ENCODE measurements at regions of chr5 and their contacts with region 1.

Region 1: GRCh38 chr5:170267431-170268152 is 30.0 kb downstream of the LCP2 start:
- DNase-seq: peak; percentile 71 to 93 (median 78)
- ATAC-seq: peak; percentile 75
- H3K4me3 ChIP-seq: peak overlapping the region; percentile 8
- H3K4me3 Mint-ChIP-seq: peak overlapping the region; percentile 70
- H3K27ac ChIP-seq: peak overlapping the region; percentile 77 to 82
- H3K27ac Mint-ChIP-seq: peak overlapping the region; percentile 96
- H3K4me1 ChIP-seq: peaks cover 84% of the 10 kb centered on the region
- H3K4me1 Mint-ChIP-seq: peaks cover 93% of the 10 kb centered on the region
- H3K27me3 ChIP-seq: no peaks in the 10 kb centered on the region
- H3K27me3 Mint-ChIP-seq: no peaks in the 10 kb centered on the region
- CTCF ChIP-seq: peak; percentile 91

Region 2: DNA sequence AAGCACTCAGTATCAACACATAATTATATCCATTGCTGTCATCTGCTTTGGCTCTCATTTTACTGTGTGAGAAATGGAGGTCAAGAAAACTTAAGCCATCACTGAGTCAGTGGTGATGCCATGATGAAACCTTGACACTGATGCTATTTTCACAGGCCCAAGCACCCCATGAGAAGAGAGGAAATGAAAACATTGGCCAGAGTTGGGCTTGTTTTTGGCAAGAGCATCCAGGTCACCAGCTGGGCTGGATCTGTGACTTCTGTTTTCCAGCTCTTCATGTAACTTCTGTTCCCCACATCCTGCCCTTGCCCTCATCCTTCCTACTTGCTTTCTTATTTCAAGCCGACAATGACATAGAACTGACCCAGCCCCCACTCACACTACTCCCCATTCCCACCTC is 19.9 kb after region 1 on chr5:
- CTCF ChIA-PET with region 1: interaction called, 22 read pairs
- POLR2A ChIA-PET with region 1: interaction called, 426 read pairs
- intact Hi-C with region 1: no loop called
- DNase-seq: peak in 3 of 14 experiments; percentile 50 to 55 (median 51)
- ATAC-seq: no peak
- H3K4me3 ChIP-seq: no peak overlapping the region
- H3K4me3 Mint-ChIP-seq: peak overlapping the region; percentile 47
- H3K27ac ChIP-seq: peak overlapping the region; percentile 62 to 63
- H3K27ac Mint-ChIP-seq: peak overlapping the region; percentile 96
- H3K4me1 ChIP-seq: peaks cover 94% of the 10 kb centered on the region
- H3K4me1 Mint-ChIP-seq: peaks cover 100% of the 10 kb centered on the region
- H3K27me3 ChIP-seq: no peaks in the 10 kb centered on the region
- H3K27me3 Mint-ChIP-seq: no peaks in the 10 kb centered on the region
- CTCF ChIP-seq: no peak

Region 3: GRCh38 chr5:170293273-170293672 is 25.7 kb after region 1 on chr5:
- CTCF ChIA-PET with region 1: interaction called, 22 read pairs
- POLR2A ChIA-PET with region 1: interaction called, 426 read pairs
- intact Hi-C with region 1: no loop called
- DNase-seq: peak in 5 of 14 experiments; percentile 39 to 83 (median 74)
- ATAC-seq: peak; percentile 10
- H3K4me3 ChIP-seq: peak overlapping the region; percentile 66
- H3K4me3 Mint-ChIP-seq: peak overlapping the region; percentile 98
- H3K27ac ChIP-seq: peak overlapping the region; percentile 49 to 98
- H3K27ac Mint-ChIP-seq: peak overlapping the region; percentile 96
- H3K4me1 ChIP-seq: peaks cover 66% of the 10 kb centered on the region
- H3K4me1 Mint-ChIP-seq: peaks cover 82% of the 10 kb centered on the region
- H3K27me3 ChIP-seq: no peaks in the 10 kb centered on the region
- H3K27me3 Mint-ChIP-seq: no peaks in the 10 kb centered on the region
- CTCF ChIP-seq: no peak

Region 4: DNA sequence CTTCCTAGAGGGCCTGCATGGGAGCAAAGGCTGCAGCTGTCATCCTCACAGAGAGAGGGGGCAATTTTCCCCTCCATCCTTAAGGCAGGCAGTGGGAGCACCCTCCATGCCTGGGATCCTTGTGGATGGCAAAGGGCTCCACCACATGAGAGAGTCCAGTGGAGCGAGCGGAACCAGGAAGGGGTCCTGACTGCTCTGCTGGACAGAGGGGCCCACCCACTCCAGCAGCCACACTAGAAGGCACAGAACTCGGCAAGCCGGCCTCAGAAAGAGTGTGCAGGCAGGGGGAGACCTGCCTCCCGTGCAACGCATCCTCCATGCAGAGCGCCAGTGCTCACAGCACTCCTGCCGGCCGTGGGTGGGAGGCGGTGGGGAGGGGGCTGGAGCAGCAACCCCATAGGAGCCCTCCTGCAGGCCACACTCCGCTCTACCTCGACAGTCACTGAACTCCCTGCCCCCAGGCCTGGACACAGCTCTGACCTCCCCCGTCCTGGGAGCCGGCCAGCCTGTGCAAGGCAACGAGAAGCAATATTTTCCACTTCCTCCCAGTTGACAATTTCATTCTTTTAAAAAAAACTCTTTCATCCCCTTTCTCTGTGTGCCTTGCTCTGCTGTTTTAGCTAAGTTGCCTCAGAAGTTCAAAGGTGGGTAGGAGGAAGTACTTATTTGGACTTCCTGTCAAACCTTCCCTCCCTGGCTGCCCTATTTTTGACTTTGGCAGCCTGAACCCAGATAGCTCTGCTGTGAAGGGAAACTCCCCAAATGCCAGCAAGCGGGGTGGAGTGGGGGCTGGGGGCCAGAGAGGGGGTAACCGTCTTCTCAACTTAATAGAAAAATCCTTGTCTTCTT is 35.3 kb after region 1 on chr5:
- CTCF ChIA-PET with region 1: interaction called, 18 read pairs
- POLR2A ChIA-PET with region 1: interaction called, 426 read pairs
- intact Hi-C with region 1: loop called in 1 of 2 experiments (anchors 5 kb)
- DNase-seq: peak; percentile 36 to 96 (median 58)
- ATAC-seq: peak; percentile 95
- H3K4me3 ChIP-seq: peak overlapping the region; percentile 47
- H3K4me3 Mint-ChIP-seq: peak overlapping the region; percentile 87
- H3K27ac ChIP-seq: peak overlapping the region; percentile 88 to 92
- H3K27ac Mint-ChIP-seq: peak overlapping the region; percentile 96
- H3K4me1 ChIP-seq: peaks cover 82% of the 10 kb centered on the region
- H3K4me1 Mint-ChIP-seq: peaks cover 87% of the 10 kb centered on the region
- H3K27me3 ChIP-seq: no peaks in the 10 kb centered on the region
- H3K27me3 Mint-ChIP-seq: no peaks in the 10 kb centered on the region
- CTCF ChIP-seq: peak; percentile 27

Region 5: DNA sequence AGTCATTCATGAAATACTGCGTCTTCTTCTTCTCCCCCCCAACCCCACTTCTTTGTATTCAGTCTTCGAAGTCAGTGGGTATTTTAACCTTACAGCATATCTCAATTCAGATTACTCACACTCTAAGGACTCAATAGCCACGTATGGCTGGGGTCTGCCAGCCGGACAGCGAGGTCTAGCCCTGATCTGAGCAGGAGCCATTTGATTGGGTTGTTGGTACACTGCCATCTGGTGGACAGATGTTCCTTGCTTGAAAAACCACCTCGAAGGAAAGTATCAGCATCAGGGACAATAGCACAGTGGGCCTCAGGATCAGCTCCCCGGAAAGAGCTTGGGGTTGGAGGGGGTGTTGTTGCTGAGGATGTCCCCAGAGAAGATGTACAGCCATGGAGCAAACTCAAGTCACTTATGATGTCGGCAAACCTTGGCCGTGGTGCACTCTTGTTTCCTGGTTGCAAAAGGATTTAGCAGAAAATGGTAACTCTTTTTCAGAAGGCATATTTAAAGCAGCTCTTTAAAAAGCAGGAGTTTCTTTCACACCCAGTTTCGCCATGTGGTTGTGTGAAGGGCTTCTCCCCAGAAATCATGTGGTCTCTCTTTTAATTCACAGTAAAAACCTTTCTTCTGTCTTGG is 153.3 kb after region 1 on chr5:
- CTCF ChIA-PET with region 1: interaction called, 5 read pairs
- POLR2A ChIA-PET with region 1: interaction called, 4 read pairs
- intact Hi-C with region 1: loop called in 1 of 2 experiments (anchors 2 kb)
- DNase-seq: peak in 13 of 14 experiments; percentile 11 to 81 (median 39)
- ATAC-seq: peak; percentile 55
- H3K4me3 ChIP-seq: no peak overlapping the region
- H3K4me3 Mint-ChIP-seq: no peak overlapping the region
- H3K27ac ChIP-seq: no peak overlapping the region
- H3K27ac Mint-ChIP-seq: no peak overlapping the region
- H3K4me1 ChIP-seq: peaks cover 18% of the 10 kb centered on the region
- H3K4me1 Mint-ChIP-seq: peaks cover 21% of the 10 kb centered on the region
- H3K27me3 ChIP-seq: no peaks in the 10 kb centered on the region
- H3K27me3 Mint-ChIP-seq: no peaks in the 10 kb centered on the region
- CTCF ChIP-seq: peak; percentile 81

Measured in CD4-positive, alpha-beta T cell (primary cell).